A549 (cell line): ENCODE measurements at regions of chr2 and their contacts with region 1.

Region 1: GRCh38 chr2:72115552-72116546 is 31.8 kb downstream of the CYP26B1 start:
- DNase-seq: peak; percentile 87 to 97
- ATAC-seq: peak; percentile 91 to 92
- H3K4me3 ChIP-seq: 0 out of 3 replicates have a peak overlapping the region, but pooled peaks have one; percentile 6
- H3K27ac ChIP-seq: peak overlapping the region; percentile 66 to 88
- H3K4me1 ChIP-seq: peaks cover 33% of the 10 kb centered on the region
- CTCF ChIP-seq: peak; percentile 31; the same call in 2 of the 3 replicates
- EP300 ChIP-seq: no peak
- POLR2A ChIP-seq: no peak
- RAD21 ChIP-seq: 0 out of 5 replicates have a peak, but pooled peaks of 1 of the 2 experiments have one; percentile 20

Region 2: DNA sequence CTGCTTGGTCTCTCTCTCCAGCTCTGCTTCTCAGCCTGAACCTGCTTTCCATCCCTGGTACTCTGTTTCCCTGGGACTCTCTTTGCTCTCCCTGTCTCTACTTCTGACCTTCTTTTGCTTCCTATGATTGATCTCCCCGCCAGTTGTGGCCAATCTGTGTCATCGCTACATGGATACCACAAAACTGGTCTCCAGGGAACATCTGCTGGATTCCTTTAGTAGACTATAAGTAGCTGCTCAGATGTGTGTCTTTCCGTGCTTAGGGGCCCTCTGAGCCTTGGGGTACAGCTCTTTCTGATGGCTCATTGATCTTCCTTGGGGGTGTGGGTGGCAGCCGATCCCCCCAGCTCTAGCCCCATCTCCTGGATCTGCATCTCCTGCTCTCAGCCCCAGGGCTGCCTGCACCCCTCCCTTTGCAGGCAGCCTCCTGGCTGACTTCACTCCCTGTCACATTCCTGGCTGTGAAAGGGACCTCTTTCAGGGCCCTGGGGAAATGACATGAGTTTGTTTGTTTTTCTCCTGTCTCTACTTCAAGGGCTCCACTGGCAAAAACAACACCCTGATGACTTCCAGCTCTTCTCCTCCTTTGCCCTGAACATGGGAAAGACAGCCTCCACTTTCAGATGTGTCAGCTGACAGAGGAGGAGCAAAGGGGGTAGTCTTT is 301.9 kb before region 1 on chr2:
- CTCF ChIA-PET with region 1: no interaction called
- POLR2A ChIA-PET with region 1: no interaction called
- DNase-seq: no peak
- ATAC-seq: no peak
- H3K4me3 ChIP-seq: no peak overlapping the region
- H3K27ac ChIP-seq: no peak overlapping the region
- H3K4me1 ChIP-seq: no peaks in the 10 kb centered on the region
- CTCF ChIP-seq: no peak
- EP300 ChIP-seq: no peak
- POLR2A ChIP-seq: no peak
- RAD21 ChIP-seq: no peak

Region 3: DNA sequence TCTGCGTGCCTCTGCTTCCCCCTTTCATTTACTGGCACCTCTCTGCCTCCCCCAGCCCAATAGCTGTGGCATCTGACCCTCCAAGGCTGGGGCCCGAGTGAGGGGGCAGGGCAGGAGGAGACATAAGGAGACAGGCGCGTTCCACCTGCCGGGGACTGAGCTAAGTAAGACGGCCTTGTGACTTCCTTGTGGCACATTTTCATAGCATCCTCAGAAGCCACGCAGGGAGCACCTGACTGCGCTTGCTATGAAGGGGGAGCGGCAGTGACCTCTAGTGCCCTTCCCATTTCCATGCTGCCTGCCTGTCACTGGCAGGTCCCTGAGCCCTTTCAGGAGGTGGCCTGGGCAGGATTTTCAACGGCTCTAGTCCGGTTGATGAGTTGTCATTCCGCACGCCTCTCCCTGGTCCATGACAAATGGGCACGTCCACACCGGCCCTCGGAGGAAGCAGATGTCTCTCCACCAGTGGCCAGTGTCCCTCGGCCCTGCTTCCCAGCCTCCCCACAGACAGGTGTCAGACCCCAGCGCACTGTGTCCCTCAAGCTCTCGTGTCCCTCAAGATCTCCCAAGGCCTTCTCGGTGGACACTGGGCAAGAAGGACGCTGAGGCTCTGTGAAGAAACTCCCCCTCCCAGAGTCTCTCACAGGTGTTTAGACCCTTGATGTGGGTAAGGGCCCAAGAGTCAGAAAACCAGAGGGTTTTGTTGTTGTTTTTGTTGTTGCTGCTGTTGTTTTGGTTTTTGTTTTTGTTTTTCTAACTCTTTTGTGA is 10.8 kb before region 1 on chr2:
- CTCF ChIA-PET with region 1: interaction called, 5 read pairs
- POLR2A ChIA-PET with region 1: interaction called, 11 read pairs
- DNase-seq: no peak
- ATAC-seq: peak; percentile 39 to 51; a peak in 3 of 6 replicates
- H3K4me3 ChIP-seq: no peak overlapping the region
- H3K27ac ChIP-seq: no peak overlapping the region
- H3K4me1 ChIP-seq: peaks cover 8% of the 10 kb centered on the region
- CTCF ChIP-seq: no peak
- EP300 ChIP-seq: no peak
- POLR2A ChIP-seq: no peak; the same call in 1 of the 2 replicates
- RAD21 ChIP-seq: peak in 1 of 2 experiments; percentile 13; a peak in 1 of 5 replicates

Region 4: GRCh38 chr2:72126186-72127100 is 10.6 kb after region 1 on chr2:
- CTCF ChIA-PET with region 1: interaction called, 18 read pairs
- POLR2A ChIA-PET with region 1: no interaction called
- DNase-seq: no peak
- ATAC-seq: peak in 1 of 2 experiments; percentile 17; a peak in 3 of 6 replicates
- H3K4me3 ChIP-seq: no peak overlapping the region
- H3K27ac ChIP-seq: no peak overlapping the region
- H3K4me1 ChIP-seq: no peaks in the 10 kb centered on the region
- CTCF ChIP-seq: no peak
- EP300 ChIP-seq: no peak
- POLR2A ChIP-seq: no peak
- RAD21 ChIP-seq: no peak